Activated CD8-positive, alpha-beta T cell treated with anti-CD3 and anti-CD28 coated beads for 36 hours (primary cell): ENCODE measurements at regions of chr5 and their contacts with region 1.

Region 1: DNA sequence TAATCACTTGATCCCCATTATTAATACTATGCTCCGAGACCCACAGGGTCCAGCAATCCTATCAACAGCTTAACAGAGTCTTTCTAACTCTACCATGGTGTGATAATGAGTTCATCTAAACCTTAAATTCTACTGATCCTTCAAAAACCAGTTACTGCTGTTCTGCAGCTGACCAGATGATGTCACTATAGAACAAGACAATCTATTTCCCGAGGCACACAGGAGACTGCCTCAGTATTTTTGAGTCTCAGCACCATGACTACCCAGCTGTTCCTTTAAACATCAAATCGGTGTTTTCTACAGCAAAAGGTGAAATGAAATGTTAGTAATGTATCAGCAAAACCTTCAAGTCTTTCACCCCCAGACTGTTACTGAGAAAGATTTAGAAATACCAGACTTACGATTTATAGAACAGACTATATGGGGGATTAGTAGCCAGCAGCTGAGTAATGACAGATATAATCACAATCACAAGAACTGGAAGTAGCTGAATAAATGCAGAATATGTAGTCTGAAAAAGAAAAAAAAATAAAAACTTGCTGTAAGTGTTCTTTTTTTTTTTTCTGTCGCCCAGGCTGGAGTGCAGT is 16.9 kb downstream of the DNAJC18 start:
- DNase-seq: peak; percentile 72
- ATAC-seq: peak; percentile 96
- H3K4me3 Mint-ChIP-seq: no peak overlapping the region
- H3K27ac Mint-ChIP-seq: no peak overlapping the region
- H3K4me1 Mint-ChIP-seq: peaks cover 5% of the 10 kb centered on the region
- H3K27me3 Mint-ChIP-seq: no peaks in the 10 kb centered on the region
- CTCF ChIP-seq: peak; percentile 96

Region 2: DNA sequence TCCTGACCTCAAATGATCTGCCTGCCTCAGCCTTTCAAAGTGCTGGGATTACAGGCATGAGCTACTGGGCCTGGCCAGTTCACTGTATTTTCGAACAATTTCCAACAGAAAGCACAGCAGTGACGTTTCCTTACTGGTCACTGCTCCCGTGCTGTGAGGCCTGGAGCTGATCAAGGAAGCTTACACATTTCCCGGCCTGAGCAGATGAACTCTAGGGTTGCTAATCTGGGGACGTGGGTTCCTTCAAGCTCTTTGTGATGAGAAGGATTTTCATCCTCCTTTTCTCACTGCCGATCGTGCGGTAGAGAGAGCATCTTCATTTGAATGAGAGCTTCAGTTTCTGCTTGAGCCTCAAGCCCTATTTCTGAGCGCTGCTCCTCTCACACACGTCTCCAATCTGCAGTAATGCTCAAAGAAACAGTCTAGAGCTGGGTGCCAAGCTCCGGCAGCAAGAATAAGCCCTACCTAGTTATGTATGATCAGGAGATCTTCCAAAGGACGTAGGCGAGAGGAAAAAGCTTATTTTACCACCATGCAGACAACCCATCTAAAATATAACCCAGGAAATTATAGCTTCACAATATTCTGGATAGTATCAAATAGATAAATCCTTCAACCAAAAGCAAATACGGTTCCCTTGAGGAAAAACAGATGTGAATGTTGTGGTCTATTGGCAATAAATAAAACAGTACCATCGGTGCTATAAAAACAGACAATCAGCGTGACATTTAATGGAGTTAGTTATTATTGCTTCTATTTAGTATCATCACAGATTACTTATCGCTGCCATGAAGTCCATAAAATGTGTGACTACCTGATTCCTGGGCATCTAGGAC is 11.2 kb before region 1 on chr5:
- CTCF ChIA-PET with region 1: interaction called, 19 read pairs
- POLR2A ChIA-PET with region 1: interaction called, 5 read pairs
- intact Hi-C with region 1: no loop called
- DNase-seq: no peak
- ATAC-seq: no peak
- H3K4me3 Mint-ChIP-seq: no peak overlapping the region
- H3K27ac Mint-ChIP-seq: no peak overlapping the region
- H3K4me1 Mint-ChIP-seq: peaks cover 45% of the 10 kb centered on the region
- H3K27me3 Mint-ChIP-seq: no peaks in the 10 kb centered on the region
- CTCF ChIP-seq: no peak

Region 3: DNA sequence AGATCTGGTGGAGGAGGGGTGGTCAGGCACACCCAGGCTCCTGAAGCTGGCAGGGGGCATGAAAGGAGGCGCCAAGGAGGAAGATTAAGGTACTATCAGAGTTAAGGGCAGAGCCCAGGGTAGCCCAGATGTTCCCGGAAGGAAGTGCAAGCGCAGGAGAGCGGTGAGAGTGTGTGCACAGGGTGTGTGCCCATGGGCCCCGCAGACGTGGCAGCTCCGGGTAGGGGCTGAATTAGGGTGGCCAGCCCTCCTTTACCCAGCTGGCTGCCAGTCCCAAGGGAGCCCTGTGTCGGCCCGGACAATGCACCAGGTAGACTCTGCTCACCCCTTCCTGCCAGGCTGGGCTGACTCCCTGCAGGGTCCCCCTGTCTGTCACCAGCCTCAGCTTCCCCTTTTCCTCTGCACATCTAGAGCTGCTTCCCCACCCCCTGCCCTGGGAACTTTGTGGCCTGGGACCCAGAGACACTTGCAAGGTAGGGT is 48.5 kb after region 1 on chr5 and contains the start of gene SMIM33:
- CTCF ChIA-PET with region 1: interaction called, 12 read pairs
- POLR2A ChIA-PET with region 1: interaction called, 3 read pairs
- intact Hi-C with region 1: no loop called
- DNase-seq: peak; percentile 39
- ATAC-seq: peak; percentile 64
- H3K4me3 Mint-ChIP-seq: peak within 1 kb of the TSS; percentile 69
- H3K27ac Mint-ChIP-seq: peak within 1 kb of the TSS; percentile 93
- H3K4me1 Mint-ChIP-seq: peaks cover 64% of the 10 kb centered on the region
- H3K27me3 Mint-ChIP-seq: no peaks in the 10 kb centered on the region
- CTCF ChIP-seq: no peak
- total RNA-seq, gene SMIM33: 0.16 TPM in 1 of 2 experiments, not detected in the other

Region 4: DNA sequence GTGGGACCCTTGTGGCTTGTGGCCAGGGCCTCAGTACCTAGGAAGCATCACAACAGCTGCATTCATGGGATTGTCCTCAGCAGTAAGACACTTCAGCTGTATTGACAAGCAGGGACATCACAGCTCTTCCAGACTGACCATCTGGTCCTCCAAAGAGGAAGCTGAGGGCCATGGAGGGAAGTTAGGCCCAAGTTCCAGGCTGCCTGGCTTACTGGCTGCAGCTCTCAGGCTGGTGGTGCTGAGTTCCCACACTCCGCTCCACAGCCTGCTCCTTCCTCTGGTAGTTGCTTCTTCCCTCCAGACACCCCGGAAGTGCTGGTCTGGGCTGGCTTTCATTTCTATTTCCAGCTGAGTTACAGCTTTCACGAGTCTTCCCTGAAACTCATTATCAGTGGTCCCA is 65.9 kb after region 1 on chr5:
- CTCF ChIA-PET with region 1: interaction called, 11 read pairs
- POLR2A ChIA-PET with region 1: interaction called, 4 read pairs
- intact Hi-C with region 1: no loop called
- DNase-seq: no peak
- ATAC-seq: no peak
- H3K4me3 Mint-ChIP-seq: no peak overlapping the region
- H3K27ac Mint-ChIP-seq: peak overlapping the region; percentile 25
- H3K4me1 Mint-ChIP-seq: peaks cover 16% of the 10 kb centered on the region
- H3K27me3 Mint-ChIP-seq: no peaks in the 10 kb centered on the region
- CTCF ChIP-seq: no peak

Region 5: DNA sequence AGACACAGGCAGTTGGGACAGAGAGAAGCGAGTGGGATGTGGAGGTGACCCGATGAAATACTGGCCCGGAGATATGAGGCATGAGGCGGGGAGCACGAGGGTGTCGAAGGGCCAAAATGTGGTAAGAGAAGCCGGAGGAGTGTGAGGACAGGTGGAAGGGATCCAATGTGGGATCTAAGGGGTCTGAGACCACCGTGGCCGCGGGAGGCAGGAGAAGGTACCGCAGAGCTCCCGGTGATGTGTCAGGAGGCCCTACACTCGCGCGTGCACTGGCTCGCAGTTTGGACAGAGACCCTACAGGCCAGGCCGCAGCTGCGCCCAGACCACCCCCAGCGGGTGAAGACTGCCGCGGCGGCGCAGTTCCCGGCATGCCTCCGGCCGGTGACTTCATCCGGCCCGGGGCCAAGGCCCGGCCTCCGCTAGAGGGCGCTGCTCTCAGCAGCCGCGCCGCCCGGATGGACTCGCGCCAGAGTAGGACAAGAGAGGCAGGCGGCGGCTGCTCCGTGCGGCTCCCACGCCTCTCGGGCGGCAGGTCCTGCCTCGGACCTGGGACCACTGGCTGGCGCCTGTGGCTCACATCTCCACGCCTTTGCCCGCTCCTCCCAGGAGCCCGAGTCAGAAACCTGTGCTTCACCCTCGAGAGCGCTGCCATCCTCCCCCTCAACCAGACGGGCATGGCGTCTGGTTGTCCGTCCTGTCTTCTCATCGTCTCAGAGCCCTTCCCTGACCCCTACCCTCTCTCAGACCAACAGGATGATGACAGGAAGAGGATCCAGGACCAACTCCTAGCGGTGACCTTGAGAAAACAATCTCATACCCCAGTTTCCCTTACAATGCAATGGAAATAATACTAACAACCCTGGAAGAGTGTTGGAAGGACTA is 95.5 kb after region 1 on chr5:
- CTCF ChIA-PET with region 1: interaction called, 444 read pairs
- POLR2A ChIA-PET with region 1: interaction called, 10 read pairs
- intact Hi-C with region 1: loop called (anchors 1 kb)
- DNase-seq: peak; percentile 91
- ATAC-seq: peak; percentile 92
- H3K4me3 Mint-ChIP-seq: peak overlapping the region; percentile 74
- H3K27ac Mint-ChIP-seq: peak overlapping the region; percentile 90
- H3K4me1 Mint-ChIP-seq: peaks cover 19% of the 10 kb centered on the region
- H3K27me3 Mint-ChIP-seq: peaks cover 1% of the 10 kb centered on the region
- CTCF ChIP-seq: peak; percentile 98

Region 6: GRCh38 chr5:139765409-139766217 is 343.2 kb after region 1 on chr5:
- CTCF ChIA-PET with region 1: interaction called, 14 read pairs
- POLR2A ChIA-PET with region 1: no interaction called
- intact Hi-C with region 1: no loop called
- DNase-seq: peak; percentile 83
- ATAC-seq: peak; percentile 94
- H3K4me3 Mint-ChIP-seq: peak overlapping the region; percentile 56
- H3K27ac Mint-ChIP-seq: peak overlapping the region; percentile 59
- H3K4me1 Mint-ChIP-seq: peaks cover 12% of the 10 kb centered on the region
- H3K27me3 Mint-ChIP-seq: peaks cover 21% of the 10 kb centered on the region
- CTCF ChIP-seq: peak; percentile 100